ENCODE measurements at regions of chr1 and their contacts with region 1.

Region 1: GRCh38 chr1:222441066-222441465 is 106.8 kb downstream of the HHIPL2 start:
- DNase-seq: no peak
- ATAC-seq: no peak
- H3K4me3 ChIP-seq: no peak overlapping the region
- H3K4me3 Mint-ChIP-seq: no peak overlapping the region
- H3K27ac ChIP-seq: no peak overlapping the region
- H3K27ac Mint-ChIP-seq: no peak overlapping the region
- H3K4me1 ChIP-seq: peaks cover 2 to 6% of the 10 kb centered on the region in 2 experiments
- H3K4me1 Mint-ChIP-seq: peaks cover 20 to 33% (median 29%) of the 10 kb centered on the region in 3 donors
- H3K27me3 ChIP-seq: no peaks in the 10 kb centered on the region
- H3K27me3 Mint-ChIP-seq: no peaks in the 10 kb centered on the region

Region 2: DNA sequence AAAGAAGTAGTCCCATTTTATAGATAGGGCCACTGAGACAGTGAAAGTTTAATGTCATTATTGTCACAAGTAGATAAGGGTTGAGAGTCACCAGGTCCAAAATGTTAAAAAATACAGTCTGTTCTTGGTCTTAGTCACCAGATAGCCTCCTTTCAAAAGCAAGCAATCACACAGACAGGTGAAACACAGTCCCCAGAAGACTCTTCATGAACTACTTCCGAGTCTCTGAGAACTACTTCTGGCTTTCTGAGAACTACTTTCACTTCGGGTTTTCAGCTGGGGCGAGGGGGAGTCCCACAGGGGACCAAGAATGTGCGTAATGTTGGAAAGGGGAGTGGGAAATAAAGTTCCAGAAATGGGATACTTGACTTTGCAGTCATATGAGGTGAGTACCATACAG is 36.4 kb before region 1 on chr1:
- CTCF ChIA-PET with region 1: interaction called in 1 of 2 experiments, 10 read pairs
- POLR2A ChIA-PET with region 1: no interaction called
- DNase-seq: no peak
- ATAC-seq: peak in 2 of 4 experiments; percentile 41 to 50
- H3K4me3 ChIP-seq: peak overlapping the region in 1 of 2 donors; percentile 38
- H3K4me3 Mint-ChIP-seq: peak overlapping the region; percentile 61 to 87 (median 69)
- H3K27ac ChIP-seq: no peak overlapping the region
- H3K27ac Mint-ChIP-seq: peak overlapping the region; percentile 62 to 78
- H3K4me1 ChIP-seq: no peaks in the 10 kb centered on the region
- H3K4me1 Mint-ChIP-seq: peaks cover 5 to 12% (median 11%) of the 10 kb centered on the region in 3 donors
- H3K27me3 ChIP-seq: no peaks in the 10 kb centered on the region
- H3K27me3 Mint-ChIP-seq: peaks cover 0 to 2% of the 10 kb centered on the region in 2 donors

Region 3: GRCh38 chr1:222455188-222455879 is 14.3 kb after region 1 on chr1:
- CTCF ChIA-PET with region 1: interaction called, 3 to 20 read pairs
- POLR2A ChIA-PET with region 1: no interaction called
- DNase-seq: peak; percentile 59 to 92 (median 77)
- ATAC-seq: peak; percentile 97 to 99 (median 98)
- H3K4me3 ChIP-seq: no peak overlapping the region
- H3K4me3 Mint-ChIP-seq: peak overlapping the region in 2 of 3 donors; percentile 10 to 32
- H3K27ac ChIP-seq: no peak overlapping the region
- H3K27ac Mint-ChIP-seq: peak overlapping the region; percentile 69 to 84
- H3K4me1 ChIP-seq: peaks cover 5 to 10% of the 10 kb centered on the region in 2 experiments
- H3K4me1 Mint-ChIP-seq: peaks cover 18 to 26% (median 24%) of the 10 kb centered on the region in 3 donors
- H3K27me3 ChIP-seq: peaks cover 0 to 2% of the 10 kb centered on the region in 2 experiments
- H3K27me3 Mint-ChIP-seq: peaks cover 0 to 4% of the 10 kb centered on the region in 2 donors